Activated CD8-positive, alpha-beta T cell treated with anti-CD3 and anti-CD28 coated beads, Interleukin-2, amount 10 ng/mL, durations not matched to agents 7 days and 5 days (primary cell): ENCODE measurements at regions of chr6 and their contacts with region 1.

Region 1: DNA sequence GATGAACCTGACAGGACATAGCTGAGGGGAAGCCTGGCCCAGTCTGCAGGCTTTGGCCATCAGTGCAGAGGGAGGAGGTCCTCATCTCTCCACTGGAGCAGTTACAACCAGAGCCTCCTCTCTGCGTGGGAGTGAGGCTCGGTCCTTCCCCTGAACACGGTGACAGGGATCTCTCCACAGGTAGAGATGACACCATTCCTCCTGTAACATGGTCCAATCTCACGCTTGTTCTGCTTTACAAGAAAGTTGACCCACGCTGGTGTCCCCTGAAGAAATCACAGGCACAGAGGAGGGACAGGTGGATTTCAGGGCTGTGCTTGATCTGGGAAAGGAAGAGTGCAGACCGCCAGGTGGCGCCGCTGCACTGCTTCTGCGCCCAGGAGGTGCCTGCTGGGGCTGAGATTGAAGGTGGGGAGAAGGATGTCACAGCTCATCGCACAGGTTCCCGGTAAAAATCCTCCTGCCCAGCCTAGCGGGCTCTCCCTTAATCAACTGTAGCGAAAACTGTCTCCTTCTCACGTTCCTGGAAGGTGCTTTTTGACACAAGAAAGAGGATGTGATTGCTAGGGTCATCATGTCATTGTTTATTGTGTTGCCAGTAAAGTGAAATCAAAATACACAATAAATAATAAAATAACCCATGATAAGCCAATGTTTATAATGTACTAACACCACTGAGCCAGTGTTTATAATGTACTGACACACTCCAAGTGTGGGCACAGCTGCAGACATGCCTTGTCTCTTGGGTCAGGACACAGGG is 20.4 kb downstream of the HLA-G start:
- DNase-seq: peak; percentile 87
- ATAC-seq: peak; percentile 90
- H3K4me3 Mint-ChIP-seq: no peak overlapping the region
- H3K27ac Mint-ChIP-seq: no peak overlapping the region
- H3K4me1 Mint-ChIP-seq: peaks cover 16% of the 10 kb centered on the region
- H3K27me3 Mint-ChIP-seq: peaks cover 58% of the 10 kb centered on the region

Region 2: DNA sequence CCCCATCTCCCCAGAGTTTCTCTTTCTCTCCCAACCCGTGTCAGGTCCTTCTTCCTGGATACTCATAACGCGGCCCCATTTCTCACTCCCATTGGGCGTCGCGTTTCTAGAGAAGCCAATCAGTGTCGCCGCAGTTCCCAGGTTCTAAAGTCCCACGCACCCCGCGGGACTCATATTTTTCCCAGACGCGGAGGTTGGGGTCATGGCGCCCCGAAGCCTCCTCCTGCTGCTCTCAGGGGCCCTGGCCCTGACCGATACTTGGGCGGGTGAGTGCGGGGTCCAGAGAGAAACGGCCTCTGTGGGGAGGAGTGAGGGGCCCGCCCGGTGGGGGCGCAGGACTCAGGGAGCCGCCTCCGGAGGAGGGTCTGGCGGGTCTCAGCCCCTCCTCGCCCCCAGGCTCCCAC is 124.8 kb before region 1 on chr6 and contains the start of gene HLA-F:
- CTCF ChIA-PET with region 1: no interaction called
- POLR2A ChIA-PET with region 1: no interaction called
- DNase-seq: peak; percentile 81
- ATAC-seq: peak; percentile 85
- H3K4me3 Mint-ChIP-seq: peak within 1 kb of the TSS; percentile 81
- H3K27ac Mint-ChIP-seq: peak within 1 kb of the TSS; percentile 84
- H3K4me1 Mint-ChIP-seq: peaks cover 58% of the 10 kb centered on the region
- H3K27me3 Mint-ChIP-seq: no peaks in the 10 kb centered on the region
- total RNA-seq, gene HLA-F: 170 to 181 TPM

Region 3: GRCh38 chr6:29827579-29828470 is 20.2 kb before region 1 on chr6 and contains the start of gene HLA-G:
- CTCF ChIA-PET with region 1: no interaction called
- POLR2A ChIA-PET with region 1: no interaction called
- DNase-seq: no peak
- ATAC-seq: peak; percentile 29
- H3K4me3 Mint-ChIP-seq: peak within 1 kb of the TSS; percentile 26
- H3K27ac Mint-ChIP-seq: no peak within 1 kb of the TSS
- H3K4me1 Mint-ChIP-seq: peaks cover 6% of the 10 kb centered on the region
- H3K27me3 Mint-ChIP-seq: peaks cover 76% of the 10 kb centered on the region
- total RNA-seq, gene HLA-G: 2.9 to 4.6 TPM

Region 4: DNA sequence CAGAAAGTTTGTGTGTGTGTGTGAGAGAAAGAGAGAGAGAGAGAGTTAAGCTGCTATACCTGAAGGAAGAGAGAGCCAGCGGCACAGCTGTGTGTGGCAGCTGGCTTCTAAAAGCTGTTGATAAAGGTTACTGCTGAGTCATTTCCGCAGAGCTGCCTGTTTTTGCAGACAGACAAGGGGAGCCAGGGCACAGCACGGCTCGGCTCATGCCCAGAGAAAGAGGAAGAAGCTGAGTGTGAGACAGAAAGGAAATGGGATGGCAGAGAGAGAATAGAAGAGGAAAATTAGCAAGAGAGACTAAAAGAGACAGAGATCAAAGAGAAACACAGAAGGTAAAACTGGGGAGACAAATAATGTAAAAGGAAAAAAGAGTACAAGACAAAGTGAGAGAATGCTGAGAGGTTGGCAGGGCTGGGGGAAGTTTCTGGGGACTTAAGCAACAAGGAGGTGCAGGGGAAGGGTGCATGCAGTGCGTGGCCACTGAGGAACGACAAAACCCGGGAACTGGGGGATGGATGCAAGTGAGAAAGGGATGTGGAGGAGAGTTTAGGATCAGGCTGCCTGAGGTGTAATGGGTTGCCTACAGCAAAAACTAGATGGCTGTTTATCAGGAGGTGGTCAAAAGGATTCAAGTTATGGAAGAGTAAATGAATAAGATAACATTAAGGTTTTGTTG is 117.0 kb after region 1 on chr6:
- CTCF ChIA-PET with region 1: interaction called, 38 read pairs
- POLR2A ChIA-PET with region 1: no interaction called
- DNase-seq: peak; percentile 68
- ATAC-seq: peak; percentile 94
- H3K4me3 Mint-ChIP-seq: peak overlapping the region; percentile 20
- H3K27ac Mint-ChIP-seq: peak overlapping the region; percentile 71
- H3K4me1 Mint-ChIP-seq: peaks cover 30% of the 10 kb centered on the region
- H3K27me3 Mint-ChIP-seq: no peaks in the 10 kb centered on the region

Region 5: GRCh38 chr6:30013291-30013922 is 165.4 kb after region 1 on chr6:
- CTCF ChIA-PET with region 1: interaction called, 36 read pairs
- POLR2A ChIA-PET with region 1: interaction called, 3 read pairs
- DNase-seq: no peak
- ATAC-seq: peak; percentile 65
- H3K4me3 Mint-ChIP-seq: no peak overlapping the region
- H3K27ac Mint-ChIP-seq: no peak overlapping the region
- H3K4me1 Mint-ChIP-seq: no peaks in the 10 kb centered on the region
- H3K27me3 Mint-ChIP-seq: no peaks in the 10 kb centered on the region